ENCODE measurements at regions of chr3 and their contacts with region 1.

Region 1: GRCh38 chr3:132135628-132136333 is 101.0 kb upstream of the CPNE4 start:
- DNase-seq: peak; percentile 80
- H3K4me3 Mint-ChIP-seq: peak overlapping the region; percentile 74
- H3K27ac Mint-ChIP-seq: peak overlapping the region; percentile 99
- H3K4me1 Mint-ChIP-seq: peaks cover 53% of the 10 kb centered on the region
- H3K27me3 Mint-ChIP-seq: no peaks in the 10 kb centered on the region
- CTCF ChIP-seq: no peak

Region 2: GRCh38 chr3:132083583-132084279 is 52.0 kb before region 1 on chr3:
- CTCF ChIA-PET with region 1: interaction called, 9 read pairs
- intact Hi-C with region 1: loop called (anchors 1 kb)
- DNase-seq: peak; percentile 54
- H3K4me3 Mint-ChIP-seq: peak overlapping the region; percentile 31
- H3K27ac Mint-ChIP-seq: peak overlapping the region; percentile 0
- H3K4me1 Mint-ChIP-seq: peaks cover 49% of the 10 kb centered on the region
- H3K27me3 Mint-ChIP-seq: no peaks in the 10 kb centered on the region
- CTCF ChIP-seq: no peak

Region 3: GRCh38 chr3:132117642-132118041 is 18.1 kb before region 1 on chr3:
- CTCF ChIA-PET with region 1: interaction called, 5 read pairs
- intact Hi-C with region 1: loop called (anchors 2 kb)
- DNase-seq: peak; percentile 20
- H3K4me3 Mint-ChIP-seq: no peak overlapping the region
- H3K27ac Mint-ChIP-seq: no peak overlapping the region
- H3K4me1 Mint-ChIP-seq: peaks cover 32% of the 10 kb centered on the region
- H3K27me3 Mint-ChIP-seq: no peaks in the 10 kb centered on the region
- CTCF ChIP-seq: no peak

Measured in Calu3 (cell line).